ENCODE measurements at regions of chr7 and their contacts with region 1.

Region 1: GRCh38 chr7:50142425-50143017 is 49.5 kb upstream of the ZPBP start:
- DNase-seq: peak; percentile 65 to 84 (median 76)
- H3K4me3 ChIP-seq: peak overlapping the region in 1 of 7 experiments; percentile 44
- H3K27ac ChIP-seq: no peak overlapping the region
- H3K4me1 ChIP-seq: peaks cover 2 to 22% (median 12%) of the 10 kb centered on the region in 4 experiments
- H3K27me3 ChIP-seq: no peaks in the 10 kb centered on the region

Region 2: GRCh38 chr7:50156706-50157105 is 14.2 kb after region 1 on chr7:
- CTCF ChIA-PET with region 1: interaction called, 15 read pairs
- POLR2A ChIA-PET with region 1: no interaction called
- DNase-seq: peak; percentile 86 to 96 (median 94)
- H3K4me3 ChIP-seq: peak overlapping the region in 5 of 7 experiments; percentile 5 to 56 (median 26)
- H3K27ac ChIP-seq: peak overlapping the region; percentile 75 to 88
- H3K4me1 ChIP-seq: peaks cover 8 to 34% (median 24%) of the 10 kb centered on the region in 4 experiments
- H3K27me3 ChIP-seq: no peaks in the 10 kb centered on the region

Measured in common myeloid progenitor, CD34-positive (primary cell).